Gastrocnemius medialis (tissue), 4 donors: ENCODE measurements at regions of chr13 and their contacts with region 1.

Region 1: GRCh38 chr13:45372189-45373148 is 31.5 kb upstream of the TPT1 start:
- DNase-seq: peak in 1 of 2 donors; percentile 61
- ATAC-seq: peak in 1 of 2 donors; percentile 63
- H3K4me3 ChIP-seq: no peak overlapping the region
- H3K27ac ChIP-seq: peak overlapping the region; percentile 32 to 69 (median 64)
- H3K4me1 ChIP-seq: peaks cover 31 to 37% of the 10 kb centered on the region in 2 donors
- H3K27me3 ChIP-seq: no peaks in the 10 kb centered on the region
- CTCF ChIP-seq: no peak
- POLR2A ChIP-seq: no peak

Region 2: DNA sequence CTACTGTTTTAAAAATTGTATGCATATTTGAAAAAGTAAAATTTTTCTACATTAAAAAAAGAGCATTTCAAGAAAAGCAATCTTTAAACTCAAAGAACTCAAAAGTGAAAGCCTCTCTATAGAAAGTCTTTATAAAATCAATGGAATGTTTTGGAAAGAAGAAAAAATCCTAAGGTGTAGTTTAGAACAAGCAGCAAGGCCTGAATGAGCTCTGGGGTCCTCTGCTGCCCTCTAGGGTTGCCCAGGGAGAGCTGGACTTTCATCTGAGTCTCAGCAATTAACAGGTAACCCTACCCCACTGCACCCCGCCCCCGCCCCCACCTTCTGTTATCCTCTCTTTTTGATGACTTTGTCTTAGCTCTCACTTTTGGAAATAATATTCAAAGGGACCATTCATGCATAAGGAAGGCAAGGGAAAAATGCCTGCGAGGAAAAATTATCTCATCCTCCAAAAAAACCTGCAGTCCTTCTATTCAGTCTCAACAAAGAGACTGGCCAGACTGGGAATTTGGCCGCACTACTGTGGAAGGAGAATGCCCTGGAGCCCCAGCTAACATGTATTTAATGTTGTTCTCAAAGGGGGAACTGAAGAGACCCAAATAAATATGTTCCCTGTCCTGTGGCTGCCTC is 21.6 kb after region 1 on chr13:
- in situ Hi-C with region 1: no loop called
- intact Hi-C with region 1: loop called (anchors 2 kb)
- DNase-seq: peak; percentile 28 to 44
- ATAC-seq: peak; percentile 60 to 72
- H3K4me3 ChIP-seq: no peak overlapping the region
- H3K27ac ChIP-seq: peak overlapping the region; percentile 6 to 71 (median 66)
- H3K4me1 ChIP-seq: peaks cover 33 to 50% of the 10 kb centered on the region in 2 donors
- H3K27me3 ChIP-seq: no peaks in the 10 kb centered on the region
- CTCF ChIP-seq: peak in 4 of 5 experiments; percentile 13 to 80 (median 46)
- POLR2A ChIP-seq: no peak

Region 3: GRCh38 chr13:45416516-45417128 is 44.2 kb after region 1 on chr13:
- in situ Hi-C with region 1: no loop called
- intact Hi-C with region 1: no loop called
- DNase-seq: no peak
- ATAC-seq: no peak
- H3K4me3 ChIP-seq: peak overlapping the region; percentile 78 to 91 (median 85)
- H3K27ac ChIP-seq: peak overlapping the region; percentile 91 to 99 (median 94)
- H3K4me1 ChIP-seq: peaks cover 43 to 52% of the 10 kb centered on the region in 2 donors
- H3K27me3 ChIP-seq: no peaks in the 10 kb centered on the region
- CTCF ChIP-seq: no peak
- POLR2A ChIP-seq: no peak